Calu3 (cell line): ENCODE measurements at regions of chr3 and their contacts with region 1.

Region 1: DNA sequence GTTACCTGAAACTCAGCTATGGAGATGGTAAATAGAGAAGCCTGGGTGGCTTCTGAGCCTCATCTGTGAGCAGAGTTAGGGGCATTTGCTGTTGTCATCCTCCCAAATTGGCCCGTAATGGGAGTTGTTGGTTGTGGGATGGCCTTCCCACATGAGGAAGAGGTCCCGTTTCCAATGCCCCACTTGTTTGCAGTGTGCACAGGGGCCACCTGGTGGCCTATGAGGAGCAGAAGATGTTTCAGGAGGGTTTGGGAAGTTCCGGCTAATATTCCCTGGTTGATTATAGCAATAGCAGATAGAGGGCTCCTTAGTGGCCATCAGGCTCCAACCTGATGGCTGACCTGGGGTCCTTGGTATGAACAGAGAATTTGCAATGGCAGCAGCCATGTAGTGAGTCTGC is 1546.5 kb downstream of the OTOL1 start:
- DNase-seq: peak; percentile 23
- H3K4me3 Mint-ChIP-seq: no peak overlapping the region
- H3K27ac Mint-ChIP-seq: no peak overlapping the region
- H3K4me1 Mint-ChIP-seq: no peaks in the 10 kb centered on the region
- H3K27me3 Mint-ChIP-seq: no peaks in the 10 kb centered on the region
- CTCF ChIP-seq: peak; percentile 60

Region 2: GRCh38 chr3:161914737-161915417 is 1128.2 kb before region 1 on chr3:
- CTCF ChIA-PET with region 1: no interaction called
- intact Hi-C with region 1: loop called (anchors 10 kb)
- DNase-seq: peak; percentile 43
- H3K4me3 Mint-ChIP-seq: no peak overlapping the region
- H3K27ac Mint-ChIP-seq: no peak overlapping the region
- H3K4me1 Mint-ChIP-seq: peaks cover 22% of the 10 kb centered on the region
- H3K27me3 Mint-ChIP-seq: no peaks in the 10 kb centered on the region
- CTCF ChIP-seq: no peak

Region 3: GRCh38 chr3:162295323-162295983 is 747.6 kb before region 1 on chr3:
- CTCF ChIA-PET with region 1: no interaction called
- intact Hi-C with region 1: loop called (anchors 10 kb)
- DNase-seq: peak; percentile 47
- H3K4me3 Mint-ChIP-seq: peak overlapping the region; percentile 11
- H3K27ac Mint-ChIP-seq: peak overlapping the region; percentile 40
- H3K4me1 Mint-ChIP-seq: peaks cover 41% of the 10 kb centered on the region
- H3K27me3 Mint-ChIP-seq: no peaks in the 10 kb centered on the region
- CTCF ChIP-seq: no peak

Region 4: GRCh38 chr3:162760789-162761188 is 282.3 kb before region 1 on chr3:
- CTCF ChIA-PET with region 1: no interaction called
- intact Hi-C with region 1: no loop called
- DNase-seq: no peak
- H3K4me3 Mint-ChIP-seq: no peak overlapping the region
- H3K27ac Mint-ChIP-seq: no peak overlapping the region
- H3K4me1 Mint-ChIP-seq: no peaks in the 10 kb centered on the region
- H3K27me3 Mint-ChIP-seq: no peaks in the 10 kb centered on the region
- CTCF ChIP-seq: no peak

Region 5: GRCh38 chr3:162777111-162777510 is 266.0 kb before region 1 on chr3:
- CTCF ChIA-PET with region 1: no interaction called
- intact Hi-C with region 1: loop called (anchors 5 kb)
- DNase-seq: peak; percentile 17
- H3K4me3 Mint-ChIP-seq: no peak overlapping the region
- H3K27ac Mint-ChIP-seq: no peak overlapping the region
- H3K4me1 Mint-ChIP-seq: no peaks in the 10 kb centered on the region
- H3K27me3 Mint-ChIP-seq: no peaks in the 10 kb centered on the region
- CTCF ChIP-seq: peak; percentile 55